ENCODE measurements at regions of chr19 and their contacts with region 1.

Region 1: GRCh38 chr19:42199440-42200115 is 17.9 kb downstream of the DEDD2 start:
- DNase-seq: peak; percentile 53 to 75 (median 65)
- H3K4me3 ChIP-seq: peak overlapping the region; percentile 43 to 49
- H3K4me3 Mint-ChIP-seq: peak overlapping the region; percentile 80 to 93 (median 88)
- H3K27ac ChIP-seq: peak overlapping the region; percentile 86
- H3K27ac Mint-ChIP-seq: peak overlapping the region; percentile 86 to 96 (median 96)
- H3K4me1 ChIP-seq: peaks cover 94% of the 10 kb centered on the region
- H3K4me1 Mint-ChIP-seq: peaks cover 63 to 93% (median 78%) of the 10 kb centered on the region in 4 donors
- H3K27me3 ChIP-seq: no peaks in the 10 kb centered on the region
- H3K27me3 Mint-ChIP-seq: no peaks in the 10 kb centered on the region

Region 2: DNA sequence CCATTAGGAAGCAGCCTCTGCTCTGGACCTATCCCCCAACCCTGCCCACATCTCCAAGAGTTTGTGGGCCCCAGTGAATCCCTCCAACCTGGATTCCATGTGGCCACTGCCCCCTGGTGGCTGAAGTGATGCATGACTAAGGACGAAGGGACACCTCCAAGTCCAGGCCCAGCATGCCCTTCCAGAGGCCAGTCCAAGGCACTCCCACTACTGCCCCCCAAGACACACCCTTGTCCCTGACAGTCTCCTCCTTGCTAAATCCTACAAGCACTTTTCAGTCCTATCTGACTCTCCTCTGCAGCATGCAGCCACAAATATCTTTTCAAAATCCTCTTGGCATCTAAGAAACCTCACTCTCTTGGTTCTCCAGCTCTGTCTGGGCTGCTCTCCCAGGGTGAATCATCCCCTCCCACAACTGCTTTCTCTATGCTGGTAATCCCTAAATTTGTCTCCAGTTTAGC is 15.1 kb before region 1 on chr19:
- CTCF ChIA-PET with region 1: interaction called, 26 read pairs
- POLR2A ChIA-PET with region 1: interaction called, 63 read pairs
- intact Hi-C with region 1: loop called (anchors 1 kb)
- DNase-seq: peak; percentile 44 to 63 (median 58)
- H3K4me3 ChIP-seq: no peak overlapping the region
- H3K4me3 Mint-ChIP-seq: peak overlapping the region in 6 of 8 donors; percentile 0 to 79 (median 36)
- H3K27ac ChIP-seq: peak overlapping the region; percentile 10
- H3K27ac Mint-ChIP-seq: peak overlapping the region; percentile 40 to 94 (median 79)
- H3K4me1 ChIP-seq: peaks cover 44% of the 10 kb centered on the region
- H3K4me1 Mint-ChIP-seq: peaks cover 38 to 67% (median 55%) of the 10 kb centered on the region in 4 donors
- H3K27me3 ChIP-seq: no peaks in the 10 kb centered on the region
- H3K27me3 Mint-ChIP-seq: no peaks in the 10 kb centered on the region

Region 3: DNA sequence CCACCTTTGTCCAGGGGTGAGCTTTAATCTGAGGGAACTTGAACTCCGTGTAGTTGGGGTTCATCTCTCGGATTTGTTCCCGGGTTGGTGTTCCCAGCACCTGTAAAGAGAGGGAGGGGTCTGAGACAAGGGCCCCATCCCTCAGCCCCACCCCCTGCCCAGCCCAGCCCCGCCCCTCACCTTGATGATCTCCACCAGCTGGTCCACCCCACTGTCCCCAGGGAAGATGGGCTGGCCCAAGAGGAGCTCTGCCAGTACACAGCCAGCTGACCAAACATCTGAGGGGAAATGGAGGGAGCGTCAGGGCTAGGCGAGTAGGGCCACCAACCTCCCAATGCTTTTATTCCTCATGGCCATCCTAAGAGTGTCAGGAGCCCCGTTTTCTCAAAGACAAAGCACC is 33.5 kb after region 1 on chr19:
- CTCF ChIA-PET with region 1: interaction called, 3 read pairs
- POLR2A ChIA-PET with region 1: interaction called, 10 read pairs
- intact Hi-C with region 1: no loop called
- DNase-seq: peak in 1 of 5 donors; percentile 1
- H3K4me3 ChIP-seq: no peak overlapping the region
- H3K4me3 Mint-ChIP-seq: no peak overlapping the region
- H3K27ac ChIP-seq: no peak overlapping the region
- H3K27ac Mint-ChIP-seq: peak overlapping the region in 3 of 7 donors; percentile 50 to 75 (median 65)
- H3K4me1 ChIP-seq: peaks cover under 1% of the 10 kb centered on the region
- H3K4me1 Mint-ChIP-seq: peaks cover 2 to 10% (median 7%) of the 10 kb centered on the region in 4 donors
- H3K27me3 ChIP-seq: no peaks in the 10 kb centered on the region
- H3K27me3 Mint-ChIP-seq: no peaks in the 10 kb centered on the region

Region 4: GRCh38 chr19:42283143-42284065 is 83.8 kb after region 1 on chr19:
- CTCF ChIA-PET with region 1: interaction called, 6 read pairs
- POLR2A ChIA-PET with region 1: interaction called, 14 read pairs
- intact Hi-C with region 1: loop called (anchors 5 kb)
- DNase-seq: peak; percentile 96 to 98 (median 97)
- H3K4me3 ChIP-seq: peak overlapping the region; percentile 1 to 60
- H3K4me3 Mint-ChIP-seq: no peak overlapping the region
- H3K27ac ChIP-seq: peak overlapping the region; percentile 77
- H3K27ac Mint-ChIP-seq: no peak overlapping the region
- H3K4me1 ChIP-seq: peaks cover 54% of the 10 kb centered on the region
- H3K4me1 Mint-ChIP-seq: peaks cover 32 to 37% (median 33%) of the 10 kb centered on the region in 4 donors
- H3K27me3 ChIP-seq: no peaks in the 10 kb centered on the region
- H3K27me3 Mint-ChIP-seq: no peaks in the 10 kb centered on the region